ENCODE measurements at regions of chr20 and their contacts with region 1.

Region 1: GRCh38 chr20:44080646-44081267 is 106.2 kb downstream of the JPH2 start:
- DNase-seq: peak; percentile 55
- H3K4me3 Mint-ChIP-seq: no peak overlapping the region
- H3K27ac Mint-ChIP-seq: no peak overlapping the region
- H3K4me1 Mint-ChIP-seq: peaks cover 31% of the 10 kb centered on the region
- H3K27me3 Mint-ChIP-seq: peaks cover 4% of the 10 kb centered on the region

Region 2: GRCh38 chr20:43448748-43449535 is 631.8 kb before region 1 on chr20:
- intact Hi-C with region 1: loop called (anchors 1 kb)
- DNase-seq: peak; percentile 20
- H3K4me3 Mint-ChIP-seq: no peak overlapping the region
- H3K27ac Mint-ChIP-seq: no peak overlapping the region
- H3K4me1 Mint-ChIP-seq: peaks cover 3% of the 10 kb centered on the region
- H3K27me3 Mint-ChIP-seq: peaks cover 29% of the 10 kb centered on the region

Region 3: DNA sequence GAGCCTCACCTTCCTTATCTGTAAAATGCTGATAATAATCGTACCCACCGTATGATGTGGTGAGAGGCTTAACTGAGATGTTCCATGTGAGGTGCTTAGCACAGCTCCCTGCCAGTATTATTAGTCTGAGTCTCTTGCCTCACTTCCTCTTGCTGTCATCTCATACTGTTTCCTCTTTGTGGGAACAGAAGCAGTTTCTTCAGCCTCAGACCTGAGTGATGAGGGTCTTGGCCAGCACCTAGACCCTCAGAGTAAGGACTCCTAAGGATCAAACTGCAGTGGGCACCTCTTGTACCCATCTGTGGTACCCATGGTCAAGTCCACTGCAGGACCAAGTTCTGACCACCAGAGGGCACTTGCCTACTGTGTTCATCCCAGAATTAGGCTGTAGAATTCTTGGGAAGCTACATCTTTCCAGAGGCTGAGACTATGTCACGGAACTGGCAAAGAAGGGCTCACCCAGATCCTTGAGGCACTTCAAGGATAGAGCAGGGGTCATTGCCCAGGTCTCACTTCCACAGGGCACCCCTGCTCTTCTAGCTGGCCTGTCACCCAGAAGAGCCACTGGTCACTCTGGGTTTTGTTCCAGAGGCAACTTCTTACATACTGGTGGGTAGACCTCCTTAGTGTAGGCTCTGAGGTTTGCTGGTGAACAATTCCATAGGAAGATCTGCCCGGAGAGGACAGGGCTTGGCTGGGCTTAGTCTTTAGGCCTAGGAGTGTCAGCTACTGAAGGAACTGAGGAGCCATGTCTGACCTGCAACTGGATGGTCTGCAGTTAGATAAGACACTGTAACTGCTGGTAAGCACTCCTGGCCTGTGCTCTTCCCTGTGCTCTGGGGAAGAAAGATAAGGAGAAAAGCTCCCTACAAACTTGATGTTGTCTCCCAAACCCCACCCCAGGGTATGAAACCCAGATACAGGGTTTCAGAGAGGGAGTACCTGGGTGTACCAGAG is 542.6 kb before region 1 on chr20:
- intact Hi-C with region 1: loop called (anchors 1 kb)
- DNase-seq: peak; percentile 18
- H3K4me3 Mint-ChIP-seq: no peak overlapping the region
- H3K27ac Mint-ChIP-seq: no peak overlapping the region
- H3K4me1 Mint-ChIP-seq: no peaks in the 10 kb centered on the region
- H3K27me3 Mint-ChIP-seq: no peaks in the 10 kb centered on the region

Region 4: DNA sequence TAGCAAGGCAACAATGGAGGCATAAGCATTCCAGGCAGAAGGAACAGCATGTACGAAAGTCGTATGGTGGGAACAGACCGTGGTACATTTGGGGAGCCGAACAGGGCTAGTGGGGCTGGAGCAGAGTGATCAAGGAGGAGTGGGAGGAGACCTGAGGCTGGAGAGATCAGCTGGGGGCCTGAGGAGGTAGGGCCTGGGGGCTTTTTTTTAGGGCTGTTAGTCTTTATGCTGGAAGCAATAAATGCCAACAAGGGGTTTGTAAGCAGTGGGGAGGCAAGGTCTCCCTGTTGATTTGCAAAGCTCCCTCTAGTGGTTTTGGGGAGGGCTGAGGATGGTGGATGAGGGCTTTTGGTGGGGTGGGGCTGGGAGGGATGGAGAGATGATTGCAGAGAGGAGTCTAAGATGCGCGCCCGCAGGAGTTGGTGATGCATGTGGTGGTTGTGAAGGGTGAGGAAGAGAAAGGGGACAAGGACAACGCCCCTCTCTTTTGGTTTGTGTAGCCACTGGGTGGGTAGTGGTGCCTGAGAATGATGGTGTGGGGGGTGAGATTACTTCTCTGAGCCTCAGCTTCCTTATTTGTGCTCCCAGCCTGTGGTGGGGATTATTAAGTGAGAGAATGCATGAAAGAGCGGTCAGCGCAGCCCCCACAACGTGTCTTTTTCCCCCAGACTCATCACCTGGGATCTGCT is 240.2 kb before region 1 on chr20:
- intact Hi-C with region 1: loop called (anchors 1 kb)
- DNase-seq: peak; percentile 17
- H3K4me3 Mint-ChIP-seq: no peak overlapping the region
- H3K27ac Mint-ChIP-seq: peak overlapping the region; percentile 85
- H3K4me1 Mint-ChIP-seq: peaks cover 59% of the 10 kb centered on the region
- H3K27me3 Mint-ChIP-seq: peaks cover 7% of the 10 kb centered on the region

Region 5: DNA sequence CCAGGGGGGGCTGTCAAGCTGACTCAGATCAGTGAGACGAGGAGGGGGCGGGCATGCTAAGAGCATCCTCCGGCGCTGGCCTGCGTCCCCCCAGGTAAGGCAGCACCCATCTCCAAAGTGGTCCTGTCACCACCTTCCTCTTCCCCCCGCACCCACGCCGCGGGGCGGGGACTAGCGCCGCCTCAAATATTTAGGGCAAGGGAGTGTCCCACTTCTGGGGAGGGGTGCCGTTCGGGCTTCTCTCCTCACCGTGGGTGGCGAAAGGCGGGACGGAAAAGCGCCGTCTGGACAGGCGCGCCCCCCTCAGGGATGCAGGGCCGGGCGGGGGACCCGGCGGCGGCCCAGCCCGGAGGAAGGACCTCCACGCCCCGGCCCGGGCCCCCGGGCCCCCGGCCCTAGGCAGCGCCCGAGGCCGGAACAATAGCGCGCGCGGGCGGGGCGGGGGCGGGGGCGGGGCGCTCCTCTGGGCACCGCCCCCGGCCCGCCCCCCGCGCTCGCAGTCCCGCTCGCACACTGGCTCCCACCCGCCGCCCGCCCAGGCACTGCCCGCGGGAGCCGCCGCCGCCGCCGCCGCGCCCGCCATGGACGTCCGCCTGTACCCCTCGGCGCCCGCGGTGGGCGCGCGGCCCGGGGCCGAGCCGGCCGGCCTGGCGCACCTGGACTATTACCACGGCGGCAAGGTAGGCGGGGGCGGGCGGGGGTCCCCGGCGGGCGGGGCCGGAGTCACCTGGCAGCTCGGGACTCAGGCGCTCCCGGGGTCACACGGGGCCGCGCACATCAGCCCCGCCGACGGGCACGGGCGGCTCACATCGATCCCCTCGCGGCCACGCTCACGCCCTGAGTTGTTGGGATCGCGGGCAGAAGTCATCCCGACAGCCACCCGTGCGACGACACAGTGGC is 166.2 kb before region 1 on chr20 and contains the start of gene TOX2:
- intact Hi-C with region 1: loop called (anchors 5 kb)
- DNase-seq: peak; percentile 42
- H3K4me3 Mint-ChIP-seq: peak within 1 kb of the TSS; percentile 87
- H3K27ac Mint-ChIP-seq: peak within 1 kb of the TSS; percentile 81
- H3K4me1 Mint-ChIP-seq: peaks cover 29% of the 10 kb centered on the region
- H3K27me3 Mint-ChIP-seq: peaks cover 37% of the 10 kb centered on the region
- total RNA-seq, gene TOX2: 4.0 and 4.8 TPM in 2 replicates

Region 6: GRCh38 chr20:44056010-44056698 is 24.6 kb before region 1 on chr20:
- intact Hi-C with region 1: loop called (anchors 1 kb)
- DNase-seq: no peak
- H3K4me3 Mint-ChIP-seq: no peak overlapping the region
- H3K27ac Mint-ChIP-seq: no peak overlapping the region
- H3K4me1 Mint-ChIP-seq: peaks cover 20% of the 10 kb centered on the region
- H3K27me3 Mint-ChIP-seq: peaks cover 7% of the 10 kb centered on the region

Region 7: DNA sequence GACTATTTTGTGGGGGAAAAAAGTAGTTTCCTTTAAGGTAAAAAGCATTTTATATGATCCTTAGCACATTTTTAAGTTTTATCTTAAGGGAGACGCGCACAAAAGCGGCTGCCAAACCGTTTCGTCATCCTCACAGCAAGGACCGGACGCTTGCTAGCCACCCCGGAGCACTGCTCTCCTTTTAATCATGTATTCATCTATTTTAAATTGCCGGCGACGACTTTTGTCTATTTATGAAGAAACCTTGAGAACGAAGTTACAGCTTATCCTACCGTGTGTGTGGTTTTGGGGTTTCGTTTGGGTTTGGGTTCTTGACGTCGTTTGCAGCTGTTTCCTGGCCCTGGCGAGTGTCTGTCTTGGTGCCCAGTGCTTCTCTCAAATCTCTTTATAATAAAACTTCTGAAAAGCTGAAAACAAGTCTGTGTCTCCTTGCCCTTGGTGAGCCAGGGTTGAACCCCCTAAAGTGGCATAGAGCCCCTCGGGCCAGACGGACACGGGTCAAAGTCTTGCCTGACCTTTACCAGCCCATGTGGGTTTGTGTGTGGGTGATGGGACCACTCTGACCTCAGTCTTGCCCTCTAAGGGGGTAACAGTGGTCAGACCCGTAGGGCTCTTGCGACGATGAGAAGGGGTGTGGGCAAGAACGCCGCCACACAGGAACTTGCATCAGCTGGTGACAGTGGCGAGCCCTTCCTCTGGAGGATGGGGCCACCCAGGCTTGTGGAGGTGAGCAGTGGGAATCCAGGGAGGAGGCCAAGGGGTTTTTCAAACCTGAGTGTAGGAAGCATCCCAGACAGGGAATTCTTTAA is 11.3 kb before region 1 on chr20:
- intact Hi-C with region 1: loop called (anchors 1 kb)
- DNase-seq: peak; percentile 65
- H3K4me3 Mint-ChIP-seq: peak overlapping the region; percentile 52
- H3K27ac Mint-ChIP-seq: peak overlapping the region; percentile 87
- H3K4me1 Mint-ChIP-seq: peaks cover 69% of the 10 kb centered on the region
- H3K27me3 Mint-ChIP-seq: peaks cover 4% of the 10 kb centered on the region

Region 8: GRCh38 chr20:44247131-44247571 is 166.4 kb after region 1 on chr20 and contains the start of gene GDAP1L1:
- intact Hi-C with region 1: no loop called
- DNase-seq: no peak
- H3K4me3 Mint-ChIP-seq: no peak within 1 kb of the TSS
- H3K27ac Mint-ChIP-seq: no peak within 1 kb of the TSS
- H3K4me1 Mint-ChIP-seq: no peaks in the 10 kb centered on the region
- H3K27me3 Mint-ChIP-seq: peaks cover 30% of the 10 kb centered on the region
- total RNA-seq, gene GDAP1L1: 0.08 TPM in 1 of 2 replicates, not detected in the other

Region 9: GRCh38 chr20:44288252-44288651 is 207.5 kb after region 1 on chr20:
- intact Hi-C with region 1: no loop called
- DNase-seq: no peak
- H3K4me3 Mint-ChIP-seq: no peak overlapping the region
- H3K27ac Mint-ChIP-seq: no peak overlapping the region
- H3K4me1 Mint-ChIP-seq: no peaks in the 10 kb centered on the region
- H3K27me3 Mint-ChIP-seq: peaks cover 14% of the 10 kb centered on the region

Region 10: DNA sequence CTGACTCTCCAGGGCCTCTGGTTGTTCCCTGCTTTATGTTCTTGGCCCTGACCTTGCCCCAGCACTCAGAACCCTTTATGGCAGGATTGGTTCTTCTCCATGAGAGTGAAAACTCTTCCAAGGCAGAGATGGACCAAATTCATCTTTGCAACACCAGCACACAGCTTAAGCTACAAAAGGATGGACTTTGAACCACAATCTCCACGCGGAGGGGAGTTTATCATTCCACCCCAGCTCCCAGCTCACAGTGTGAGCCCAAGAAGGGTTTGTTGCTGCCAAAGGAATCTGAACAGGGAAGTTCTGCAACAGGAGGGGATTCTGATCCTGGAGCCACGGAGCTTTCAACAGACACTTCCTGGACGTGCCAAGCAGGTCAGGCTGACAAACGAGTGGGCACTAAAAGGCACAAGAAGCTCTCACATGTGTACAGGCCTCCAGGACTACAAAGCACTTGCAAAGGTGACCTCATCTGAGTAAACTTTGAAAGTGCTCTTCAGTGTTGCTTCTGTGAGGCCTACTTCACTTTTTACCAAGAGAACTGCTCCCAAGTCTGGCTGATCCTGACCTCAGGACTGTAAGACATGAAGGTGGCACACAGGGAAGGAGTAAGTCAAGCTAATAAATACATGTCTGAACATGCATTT is 221.4 kb after region 1 on chr20:
- intact Hi-C with region 1: no loop called
- DNase-seq: no peak
- H3K4me3 Mint-ChIP-seq: no peak overlapping the region
- H3K27ac Mint-ChIP-seq: no peak overlapping the region
- H3K4me1 Mint-ChIP-seq: no peaks in the 10 kb centered on the region
- H3K27me3 Mint-ChIP-seq: no peaks in the 10 kb centered on the region

Region 11: GRCh38 chr20:44342248-44342647 is 261.5 kb after region 1 on chr20:
- intact Hi-C with region 1: no loop called
- DNase-seq: no peak
- H3K4me3 Mint-ChIP-seq: no peak overlapping the region
- H3K27ac Mint-ChIP-seq: no peak overlapping the region
- H3K4me1 Mint-ChIP-seq: no peaks in the 10 kb centered on the region
- H3K27me3 Mint-ChIP-seq: peaks cover 2% of the 10 kb centered on the region